MCF 10A (cell line): ENCODE measurements at regions of chr18 and their contacts with region 1.

Region 1: GRCh38 chr18:12628706-12629702 is 28.9 kb downstream of the SPIRE1 start:
- DNase-seq: peak; percentile 52
- H3K4me3 Mint-ChIP-seq: no peak overlapping the region
- H3K27ac Mint-ChIP-seq: peak overlapping the region; percentile 71
- H3K4me1 Mint-ChIP-seq: peaks cover 26% of the 10 kb centered on the region
- H3K27me3 Mint-ChIP-seq: no peaks in the 10 kb centered on the region
- CTCF ChIP-seq: no peak

Region 2: GRCh38 chr18:12597775-12598174 is 31.2 kb before region 1 on chr18:
- CTCF ChIA-PET with region 1: no interaction called
- POLR2A ChIA-PET with region 1: interaction called, 21 read pairs
- intact Hi-C with region 1: no loop called
- DNase-seq: peak; percentile 83
- H3K4me3 Mint-ChIP-seq: peak overlapping the region; percentile 3
- H3K27ac Mint-ChIP-seq: peak overlapping the region; percentile 84
- H3K4me1 Mint-ChIP-seq: peaks cover 36% of the 10 kb centered on the region
- H3K27me3 Mint-ChIP-seq: no peaks in the 10 kb centered on the region
- CTCF ChIP-seq: no peak